Right ventricle myocardium superior (tissue), 1 donor: ENCODE measurements at regions of chr1 and their contacts with region 1.

Region 1: GRCh38 chr1:26999440-26999987 is 6.0 kb downstream of the TRNP1 start:
- DNase-seq: peak; percentile 79
- ATAC-seq: peak; percentile 73

Region 2: DNA sequence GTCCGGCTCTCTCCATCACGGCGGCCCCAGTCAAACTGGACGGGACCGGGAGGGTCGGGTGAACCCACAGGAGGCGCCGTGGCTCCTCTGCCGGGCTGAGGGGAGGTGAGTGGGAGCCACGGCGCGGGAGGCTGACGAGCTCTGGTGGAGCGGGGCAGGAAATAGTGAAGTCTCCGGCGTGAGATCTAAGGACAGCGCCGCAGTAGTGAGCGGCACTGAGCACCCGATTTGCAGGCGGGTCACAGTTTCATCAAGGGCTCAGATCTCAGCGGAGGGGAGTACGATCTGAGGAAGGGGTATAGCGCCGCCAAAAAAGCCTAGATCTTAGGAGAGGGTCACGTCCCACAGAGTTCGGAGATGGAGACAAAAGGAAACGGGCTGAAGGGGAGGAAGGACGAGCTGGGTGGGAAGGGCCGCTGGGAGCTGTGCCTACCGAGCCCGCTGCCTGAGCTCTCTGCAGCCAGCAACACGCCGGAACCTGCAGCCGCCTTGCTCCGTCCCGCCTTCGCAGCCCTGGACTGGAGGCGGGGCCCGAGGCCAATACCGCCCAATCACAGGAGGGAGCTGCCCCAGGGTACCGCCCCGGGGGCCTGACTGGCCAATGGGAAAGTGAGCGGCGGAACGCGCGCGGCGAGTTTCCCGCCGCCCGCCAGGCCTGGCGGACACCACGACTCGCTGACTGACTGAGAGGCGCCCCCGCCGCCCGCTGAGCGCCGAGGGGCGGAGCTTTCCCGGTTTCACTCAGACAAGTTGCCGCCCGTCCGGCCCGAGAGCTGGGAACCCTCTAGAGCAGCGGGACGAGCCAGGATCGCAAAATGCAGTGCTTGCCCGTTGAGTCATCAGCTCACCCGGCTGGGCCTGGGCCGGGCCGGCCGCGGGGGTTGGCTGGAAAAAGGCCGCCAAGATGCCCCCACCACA is 134.6 kb before region 1 on chr1:
- intact Hi-C with region 1: no loop called
- DNase-seq: peak; percentile 98
- ATAC-seq: peak; percentile 99

Region 3: DNA sequence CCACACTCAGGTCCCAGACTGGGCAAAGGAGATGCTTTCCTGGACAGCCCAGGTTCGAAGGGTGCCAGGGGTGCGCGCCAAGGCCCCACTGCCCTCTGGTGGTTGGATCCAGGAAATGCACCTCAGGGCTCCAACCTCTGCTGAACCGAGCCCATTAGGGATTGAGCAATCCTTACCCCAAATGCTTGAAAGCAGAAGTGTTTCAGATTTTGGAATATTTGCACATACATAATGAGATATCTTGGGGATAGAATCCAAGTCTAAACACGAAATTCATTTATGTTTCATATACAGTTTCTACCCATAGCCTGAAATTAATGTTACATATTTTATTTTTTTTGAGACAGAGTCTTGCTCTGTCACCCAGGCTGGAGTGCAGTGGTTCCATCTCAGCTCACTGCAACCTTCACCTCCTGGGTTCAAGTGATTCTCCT is 98.0 kb after region 1 on chr1:
- intact Hi-C with region 1: loop called (anchors 5 kb)
- DNase-seq: peak; percentile 85
- ATAC-seq: peak; percentile 71